Activated CD8-positive, alpha-beta T cell treated with anti-CD3 and anti-CD28 coated beads, Interleukin-2, amount 10 ng/mL, durations not matched to agents 7 days and 5 days (primary cell): ENCODE measurements at regions of chr1 and their contacts with region 1.

Region 1: DNA sequence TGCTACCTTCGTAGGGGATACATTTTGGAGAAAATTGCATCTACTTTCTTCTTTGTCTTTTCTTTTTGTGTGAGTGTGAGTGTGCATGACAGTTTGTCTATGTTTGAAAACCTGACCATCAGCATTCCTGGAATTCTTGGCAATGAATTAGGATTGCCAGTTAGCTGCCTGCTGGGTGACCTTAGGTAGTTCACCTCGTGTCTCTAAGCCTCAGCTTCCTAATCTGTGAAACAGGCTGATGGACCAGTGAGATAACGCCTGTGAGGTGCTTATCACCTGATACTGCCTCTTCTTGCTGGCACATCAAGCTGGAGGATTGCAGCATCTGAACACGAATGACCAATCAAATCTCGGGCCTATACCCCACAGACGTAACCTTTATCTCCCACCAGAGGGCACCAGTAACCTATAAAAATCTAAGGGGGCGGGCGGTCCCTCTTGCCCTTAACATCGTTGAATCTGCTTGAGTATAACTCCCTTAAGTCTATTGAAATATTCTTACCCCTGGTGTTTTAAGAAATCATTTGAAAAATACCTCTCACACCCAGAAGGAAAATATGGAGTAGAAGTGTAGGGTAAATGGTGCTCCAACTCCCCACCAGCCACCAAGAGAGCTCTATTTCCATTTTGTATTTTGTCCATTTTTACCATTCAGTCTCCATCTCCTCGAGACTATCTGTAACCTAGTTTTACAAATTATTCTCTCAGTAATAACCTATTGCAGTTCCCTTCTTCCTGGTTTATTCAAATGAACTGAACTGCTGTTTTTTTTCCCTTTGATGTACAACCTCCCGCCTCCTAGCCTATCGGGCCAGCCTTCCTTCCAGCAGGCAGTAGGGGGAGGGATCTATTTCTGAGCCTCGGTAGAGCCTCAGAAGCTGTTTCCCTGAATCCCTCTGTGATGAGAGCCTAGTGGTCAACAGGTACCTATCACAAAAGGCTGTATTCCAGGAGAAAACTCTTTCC is 49.7 kb downstream of the MDM4 start:
- DNase-seq: peak; percentile 77
- ATAC-seq: peak; percentile 80
- H3K4me3 Mint-ChIP-seq: no peak overlapping the region
- H3K27ac Mint-ChIP-seq: peak overlapping the region; percentile 59
- H3K4me1 Mint-ChIP-seq: peaks cover 56% of the 10 kb centered on the region
- H3K27me3 Mint-ChIP-seq: no peaks in the 10 kb centered on the region

Region 2: GRCh38 chr1:204359474-204360255 is 206.2 kb before region 1 on chr1 and contains the start of gene PLEKHA6:
- CTCF ChIA-PET with region 1: no interaction called
- POLR2A ChIA-PET with region 1: no interaction called
- DNase-seq: no peak
- ATAC-seq: no peak
- H3K4me3 Mint-ChIP-seq: no peak within 1 kb of the TSS
- H3K27ac Mint-ChIP-seq: no peak within 1 kb of the TSS
- H3K4me1 Mint-ChIP-seq: peaks cover 12% of the 10 kb centered on the region
- H3K27me3 Mint-ChIP-seq: peaks cover 8% of the 10 kb centered on the region
- total RNA-seq, gene PLEKHA6: 0.26 to 0.29 TPM

Region 3: DNA sequence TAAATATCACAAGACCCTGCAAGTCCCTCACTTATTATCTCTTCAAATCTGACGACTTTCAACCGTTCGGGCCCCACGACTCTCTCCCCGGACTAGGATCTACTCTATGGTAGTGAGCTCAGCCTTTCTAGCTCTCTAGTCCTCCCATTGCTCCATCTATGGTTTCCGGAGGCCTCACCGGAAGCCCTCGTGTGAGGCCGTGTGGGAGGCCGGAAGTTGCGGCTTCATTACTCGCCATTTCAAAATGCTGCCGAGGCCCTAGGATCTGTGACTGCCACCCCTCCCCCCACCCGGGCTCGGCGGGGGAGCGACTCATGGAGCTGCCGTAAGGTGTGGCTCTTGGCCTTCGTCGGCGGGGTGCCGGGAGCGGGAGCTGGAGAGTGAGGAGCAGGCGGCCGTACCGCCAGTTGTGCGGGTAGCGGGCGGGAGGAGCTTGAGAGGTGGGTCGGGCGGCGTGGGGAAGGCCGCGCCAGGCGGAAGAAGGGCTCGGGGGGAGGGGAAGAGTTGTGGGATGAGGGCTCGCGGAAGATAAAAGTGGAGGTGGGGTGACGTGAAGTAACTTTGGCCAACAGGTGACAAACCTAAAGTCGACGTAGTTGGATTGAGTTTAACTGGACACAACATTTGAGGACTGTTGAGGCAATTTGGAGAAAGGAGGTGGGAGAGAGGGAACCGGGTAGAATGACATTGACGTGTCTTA is 49.6 kb before region 1 on chr1 and contains the start of gene MDM4:
- CTCF ChIA-PET with region 1: interaction called, 49 read pairs
- POLR2A ChIA-PET with region 1: interaction called, 13 read pairs
- DNase-seq: peak; percentile 97
- ATAC-seq: peak; percentile 83
- H3K4me3 Mint-ChIP-seq: no peak within 1 kb of the TSS
- H3K27ac Mint-ChIP-seq: no peak within 1 kb of the TSS
- H3K4me1 Mint-ChIP-seq: peaks cover 65% of the 10 kb centered on the region
- H3K27me3 Mint-ChIP-seq: no peaks in the 10 kb centered on the region
- total RNA-seq, gene MDM4: 72.2 to 72.4 TPM

Region 4: DNA sequence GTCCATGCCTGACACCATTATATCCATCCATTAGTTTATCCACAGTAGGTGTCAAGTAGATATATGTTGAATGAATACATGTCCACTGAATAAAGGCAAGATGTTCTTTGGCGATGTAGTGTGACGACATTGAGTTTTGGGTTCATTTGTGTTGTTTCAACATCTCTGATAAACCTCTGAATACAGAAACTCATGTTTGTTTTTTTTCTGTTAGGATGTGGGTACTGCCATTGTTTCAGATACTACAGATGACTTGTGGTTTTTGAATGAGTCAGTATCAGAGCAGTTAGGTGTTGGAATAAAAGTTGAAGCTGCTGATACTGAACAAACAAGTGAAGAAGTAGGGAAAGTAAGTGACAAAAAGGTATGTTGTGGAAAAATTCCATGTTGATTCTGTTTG is 21.6 kb before region 1 on chr1:
- CTCF ChIA-PET with region 1: interaction called, 36 read pairs
- POLR2A ChIA-PET with region 1: interaction called, 7 read pairs
- DNase-seq: no peak
- ATAC-seq: peak; percentile 87
- H3K4me3 Mint-ChIP-seq: peak overlapping the region; percentile 23
- H3K27ac Mint-ChIP-seq: peak overlapping the region; percentile 83
- H3K4me1 Mint-ChIP-seq: peaks cover 55% of the 10 kb centered on the region
- H3K27me3 Mint-ChIP-seq: no peaks in the 10 kb centered on the region

Region 5: DNA sequence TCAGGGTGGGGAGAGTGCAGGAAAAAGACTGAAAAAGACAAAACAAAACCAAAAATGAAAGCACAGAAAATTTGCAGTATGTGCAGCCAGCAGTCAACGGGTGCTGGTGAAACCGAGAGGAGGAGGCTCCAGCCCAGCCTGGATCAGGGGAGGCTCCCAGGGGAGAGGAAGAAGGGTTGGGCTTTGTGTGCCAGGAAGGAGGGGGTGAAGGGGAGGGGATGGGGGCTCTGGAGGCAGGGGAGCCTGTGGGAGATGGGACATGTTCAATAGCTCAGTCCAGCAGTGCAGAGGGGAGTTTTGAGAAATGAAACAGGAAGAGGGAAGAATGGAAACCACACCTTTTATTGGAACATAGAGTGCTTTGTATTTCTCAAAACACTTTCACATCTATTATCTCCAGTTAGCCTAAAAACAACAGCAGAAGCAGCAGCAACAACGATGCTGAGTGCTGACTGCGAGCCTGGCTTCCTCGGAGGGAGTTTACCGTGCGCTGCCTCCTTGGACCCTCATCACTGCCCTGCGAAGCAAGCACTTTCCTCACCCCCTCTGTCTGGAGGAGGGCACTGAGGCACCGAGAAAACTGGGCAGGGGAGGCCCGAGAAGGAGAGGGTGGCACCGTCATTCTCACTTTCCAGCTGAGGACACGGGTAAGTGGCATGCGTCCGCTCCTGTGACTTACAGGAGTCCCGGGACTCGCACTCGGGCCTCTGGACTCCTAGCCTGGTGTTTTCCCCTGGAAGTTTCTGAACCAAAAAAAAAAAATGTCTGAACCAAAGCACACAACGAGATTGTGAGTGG is 13.2 kb after region 1 on chr1:
- CTCF ChIA-PET with region 1: interaction called, 36 read pairs
- POLR2A ChIA-PET with region 1: interaction called, 10 read pairs
- DNase-seq: peak; percentile 54
- ATAC-seq: peak; percentile 80
- H3K4me3 Mint-ChIP-seq: peak overlapping the region; percentile 63
- H3K27ac Mint-ChIP-seq: peak overlapping the region; percentile 90
- H3K4me1 Mint-ChIP-seq: peaks cover 33% of the 10 kb centered on the region
- H3K27me3 Mint-ChIP-seq: no peaks in the 10 kb centered on the region

Region 6: DNA sequence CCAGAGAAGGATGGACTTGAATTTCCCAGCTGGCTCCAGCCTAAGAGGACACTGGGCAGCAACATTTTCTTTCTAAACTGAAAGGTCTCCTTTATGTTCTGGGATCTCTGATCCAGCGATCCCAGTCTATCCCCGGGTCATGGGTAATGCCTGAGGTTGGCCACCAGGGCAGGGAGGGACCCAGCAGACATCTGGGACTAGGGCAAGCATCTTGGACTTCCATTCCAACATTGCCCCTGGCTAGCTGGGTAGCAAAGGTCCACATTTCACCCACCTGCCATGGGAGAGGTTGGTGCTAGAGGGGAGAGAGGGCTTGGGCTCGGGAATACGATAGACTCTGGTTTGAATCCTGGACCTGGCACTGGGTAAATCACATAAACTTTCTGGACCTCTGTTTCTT is 35.1 kb after region 1 on chr1:
- CTCF ChIA-PET with region 1: no interaction called
- POLR2A ChIA-PET with region 1: no interaction called
- DNase-seq: no peak
- ATAC-seq: no peak
- H3K4me3 Mint-ChIP-seq: no peak overlapping the region
- H3K27ac Mint-ChIP-seq: no peak overlapping the region
- H3K4me1 Mint-ChIP-seq: no peaks in the 10 kb centered on the region
- H3K27me3 Mint-ChIP-seq: no peaks in the 10 kb centered on the region

Region 7: DNA sequence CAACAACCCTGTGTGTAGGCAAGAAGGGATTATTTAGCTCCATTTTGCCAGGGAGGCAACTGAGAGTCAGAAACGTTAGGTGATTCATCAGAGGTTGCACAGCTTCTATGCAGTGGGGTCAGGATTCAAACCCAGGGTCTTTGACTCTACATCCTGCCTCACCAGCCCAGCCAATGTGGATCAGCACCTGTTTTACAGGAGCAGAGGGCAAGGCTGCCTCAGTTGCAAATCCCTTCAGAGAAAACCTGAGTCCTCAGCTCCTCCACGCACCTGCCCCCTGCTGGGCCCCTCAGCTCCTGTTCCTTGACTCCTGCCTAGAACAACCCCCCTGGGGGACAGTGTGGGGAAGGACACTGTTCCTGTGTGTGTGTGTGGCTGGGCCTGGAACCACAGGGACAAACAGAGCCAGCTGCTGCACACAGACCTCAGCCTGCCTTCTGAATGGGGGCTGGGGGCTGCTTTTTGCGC is 58.0 kb after region 1 on chr1:
- CTCF ChIA-PET with region 1: interaction called, 46 read pairs
- POLR2A ChIA-PET with region 1: no interaction called
- DNase-seq: peak; percentile 38
- ATAC-seq: peak; percentile 68
- H3K4me3 Mint-ChIP-seq: no peak overlapping the region
- H3K27ac Mint-ChIP-seq: no peak overlapping the region
- H3K4me1 Mint-ChIP-seq: no peaks in the 10 kb centered on the region
- H3K27me3 Mint-ChIP-seq: no peaks in the 10 kb centered on the region

Region 8: DNA sequence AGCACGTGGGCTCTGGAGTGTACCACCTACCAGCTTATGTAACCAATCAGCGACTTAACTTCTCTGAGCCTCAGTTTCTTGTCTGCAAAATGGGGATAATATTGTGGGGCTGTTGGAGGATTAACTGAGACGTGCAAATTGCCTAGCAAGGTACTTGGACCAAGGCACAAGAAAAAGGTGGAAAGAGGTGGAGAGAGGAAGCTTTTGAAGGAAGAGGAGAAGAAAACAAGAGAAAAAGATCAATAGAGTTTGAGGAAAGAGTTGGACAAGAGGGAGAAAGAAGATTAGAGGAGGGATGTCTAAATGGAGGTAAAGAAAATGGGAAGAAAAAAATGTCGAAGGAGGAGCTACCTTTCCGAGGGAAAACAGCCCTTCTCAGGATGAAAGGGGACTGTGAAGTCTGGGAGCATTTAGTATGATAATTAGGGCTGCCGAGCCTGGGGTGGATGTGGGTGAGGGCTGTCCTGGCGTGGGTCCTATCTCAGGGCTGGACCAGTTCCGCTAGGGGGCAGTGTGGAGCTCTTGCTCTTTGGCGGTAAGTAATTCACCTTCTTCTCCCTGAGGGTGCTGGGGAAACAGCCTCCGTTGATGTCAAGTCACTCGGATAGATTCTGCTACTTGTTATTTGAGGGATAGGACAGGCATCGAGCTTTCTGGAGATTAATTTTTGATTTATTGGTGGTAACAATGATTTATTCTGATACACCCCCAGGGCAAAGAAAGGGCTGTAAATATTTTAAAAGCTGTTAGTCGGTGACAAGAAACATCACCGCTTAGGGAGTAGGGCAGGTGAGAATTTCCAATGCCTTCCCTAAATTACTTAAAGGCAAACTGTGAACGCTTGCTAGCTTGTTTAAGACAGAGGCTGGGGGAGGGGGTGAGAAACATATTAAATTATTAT is 225.8 kb after region 1 on chr1:
- CTCF ChIA-PET with region 1: interaction called, 23 read pairs
- POLR2A ChIA-PET with region 1: no interaction called
- DNase-seq: peak; percentile 88
- ATAC-seq: peak; percentile 98
- H3K4me3 Mint-ChIP-seq: no peak overlapping the region
- H3K27ac Mint-ChIP-seq: no peak overlapping the region
- H3K4me1 Mint-ChIP-seq: peaks cover 2% of the 10 kb centered on the region
- H3K27me3 Mint-ChIP-seq: peaks cover 26% of the 10 kb centered on the region